ENCODE measurements at regions of chr4 and their contacts with region 1.

Region 1: DNA sequence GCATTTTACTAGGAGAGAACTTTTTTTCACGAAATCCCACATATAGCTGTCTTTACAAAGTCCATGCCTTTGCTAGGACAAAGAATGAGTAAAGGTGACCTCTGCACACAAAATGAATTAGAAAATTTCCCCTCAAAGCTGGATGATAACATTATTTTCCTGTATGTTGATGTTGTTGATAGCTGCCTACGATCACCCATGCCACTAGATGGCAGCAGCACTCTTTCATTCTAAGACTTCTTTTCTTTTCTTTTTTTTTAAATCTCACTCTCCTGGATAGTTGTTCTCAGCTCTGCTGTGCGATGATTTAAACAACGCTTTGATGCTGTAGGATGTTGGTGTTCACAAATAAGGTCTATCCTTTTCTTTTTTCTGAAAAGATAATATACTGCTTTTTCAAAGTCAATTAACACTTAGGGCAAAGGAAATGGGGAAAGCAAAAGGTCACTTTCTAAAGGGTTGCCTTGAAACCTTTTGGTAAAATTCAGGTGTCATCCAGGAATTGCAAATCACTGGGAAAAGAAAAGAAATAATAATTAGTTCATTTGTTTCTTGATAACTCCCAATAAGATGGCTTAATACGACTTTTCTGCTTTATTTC is 266.8 kb downstream of the C4orf33 start:
- DNase-seq: peak; percentile 51
- H3K4me3 ChIP-seq: no peak overlapping the region; a peak in 1 of 4 replicates
- H3K27ac ChIP-seq: no peak overlapping the region
- H3K4me1 ChIP-seq: peaks cover 0 to 2% of the 10 kb centered on the region in 2 experiments; a peak in 1 of 4 replicates
- H3K27me3 ChIP-seq: no peaks in the 10 kb centered on the region
- CTCF ChIP-seq: peak; percentile 93
- EP300 ChIP-seq: no peak
- RAD21 ChIP-seq: peak; percentile 94

Region 2: GRCh38 chr4:128862608-128863311 is 500.0 kb before region 1 on chr4:
- CTCF ChIA-PET with region 1: no interaction called
- POLR2A ChIA-PET with region 1: no interaction called
- DNase-seq: no peak
- H3K4me3 ChIP-seq: no peak overlapping the region
- H3K27ac ChIP-seq: no peak overlapping the region; a peak in 1 of 4 replicates
- H3K4me1 ChIP-seq: peaks cover 0 to 23% of the 10 kb centered on the region in 2 experiments; a peak in 1 of 4 replicates
- H3K27me3 ChIP-seq: no peaks in the 10 kb centered on the region
- CTCF ChIP-seq: no peak
- EP300 ChIP-seq: no peak
- RAD21 ChIP-seq: no peak

Region 3: DNA sequence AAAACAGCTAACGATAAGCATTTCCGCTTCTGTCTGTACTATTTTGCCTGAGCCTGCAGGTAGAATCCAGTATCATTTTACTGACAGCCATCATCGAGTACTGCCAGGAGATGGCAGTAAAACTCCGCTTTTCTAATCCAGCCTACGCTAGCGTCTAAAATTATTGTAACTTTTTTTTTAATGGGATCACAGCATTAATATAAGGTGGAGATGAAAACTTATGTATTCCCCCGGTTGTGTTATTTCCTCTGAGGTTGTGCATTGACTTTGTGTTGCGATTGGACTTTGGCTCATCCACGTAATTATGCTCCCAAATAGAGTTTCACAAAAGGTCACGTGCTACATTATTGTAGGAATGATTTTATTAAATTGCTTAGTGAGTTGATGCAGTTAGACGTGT is 18.7 kb before region 1 on chr4:
- CTCF ChIA-PET with region 1: interaction called, 12 read pairs
- POLR2A ChIA-PET with region 1: no interaction called
- DNase-seq: peak; percentile 34
- H3K4me3 ChIP-seq: no peak overlapping the region
- H3K27ac ChIP-seq: no peak overlapping the region
- H3K4me1 ChIP-seq: peaks cover 0 to 7% of the 10 kb centered on the region in 2 experiments; a peak in 1 of 4 replicates
- H3K27me3 ChIP-seq: no peaks in the 10 kb centered on the region
- CTCF ChIP-seq: peak; percentile 77
- EP300 ChIP-seq: no peak
- RAD21 ChIP-seq: peak; percentile 79

Region 4: GRCh38 chr4:129377131-129377845 is 14.5 kb after region 1 on chr4:
- CTCF ChIA-PET with region 1: interaction called, 33 read pairs
- POLR2A ChIA-PET with region 1: no interaction called
- DNase-seq: no peak
- H3K4me3 ChIP-seq: no peak overlapping the region
- H3K27ac ChIP-seq: no peak overlapping the region
- H3K4me1 ChIP-seq: no peaks in the 10 kb centered on the region
- H3K27me3 ChIP-seq: no peaks in the 10 kb centered on the region
- CTCF ChIP-seq: no peak
- EP300 ChIP-seq: no peak
- RAD21 ChIP-seq: no peak

Region 5: DNA sequence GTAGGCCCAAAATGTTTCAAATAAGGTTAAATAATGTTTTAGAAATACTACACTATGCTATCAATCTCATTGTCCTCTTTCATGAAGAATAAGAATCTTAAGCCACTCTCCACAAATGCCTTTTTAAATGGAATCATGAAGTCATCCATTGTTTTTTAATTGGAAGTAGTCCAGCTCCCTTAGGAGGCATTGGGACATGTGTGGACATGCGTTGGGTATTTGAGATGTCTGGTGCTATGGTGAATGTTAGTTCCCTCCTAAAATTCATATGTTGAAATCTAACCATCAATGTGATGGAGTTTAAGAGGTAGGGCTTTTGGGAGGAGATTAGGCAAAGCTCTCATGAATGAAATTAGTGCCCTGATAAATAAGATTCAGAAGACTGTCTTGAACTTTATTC is 22.2 kb after region 1 on chr4:
- CTCF ChIA-PET with region 1: interaction called, 10 read pairs
- POLR2A ChIA-PET with region 1: no interaction called
- DNase-seq: no peak
- H3K4me3 ChIP-seq: no peak overlapping the region
- H3K27ac ChIP-seq: no peak overlapping the region
- H3K4me1 ChIP-seq: no peaks in the 10 kb centered on the region
- H3K27me3 ChIP-seq: no peaks in the 10 kb centered on the region
- CTCF ChIP-seq: no peak
- EP300 ChIP-seq: no peak
- RAD21 ChIP-seq: no peak

Region 6: DNA sequence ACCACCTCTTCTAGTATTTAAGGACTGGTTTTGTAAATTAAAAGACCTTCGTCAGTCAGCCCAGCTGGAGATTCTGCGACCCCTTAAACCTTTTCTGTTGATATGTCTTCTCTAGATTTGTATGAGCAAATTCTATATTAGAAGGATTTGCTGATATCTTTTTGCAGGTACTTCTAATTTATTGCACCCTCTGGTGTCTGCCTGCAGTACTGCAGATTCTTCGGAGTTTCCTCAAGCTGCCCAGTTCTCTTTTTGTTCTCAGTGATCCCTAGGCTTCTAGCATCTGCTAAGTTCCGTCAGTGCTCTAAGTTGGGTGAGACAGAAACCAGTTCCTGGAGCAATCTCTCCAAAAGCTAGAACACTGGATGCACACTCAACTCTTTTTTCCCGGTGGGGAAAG is 278.4 kb after region 1 on chr4:
- CTCF ChIA-PET with region 1: interaction called, 152 read pairs
- POLR2A ChIA-PET with region 1: no interaction called
- DNase-seq: peak; percentile 13
- H3K4me3 ChIP-seq: no peak overlapping the region; a peak in 1 of 4 replicates
- H3K27ac ChIP-seq: no peak overlapping the region
- H3K4me1 ChIP-seq: no peaks in the 10 kb centered on the region
- H3K27me3 ChIP-seq: no peaks in the 10 kb centered on the region
- CTCF ChIP-seq: peak; percentile 81
- EP300 ChIP-seq: no peak
- RAD21 ChIP-seq: peak; percentile 76

Region 7: DNA sequence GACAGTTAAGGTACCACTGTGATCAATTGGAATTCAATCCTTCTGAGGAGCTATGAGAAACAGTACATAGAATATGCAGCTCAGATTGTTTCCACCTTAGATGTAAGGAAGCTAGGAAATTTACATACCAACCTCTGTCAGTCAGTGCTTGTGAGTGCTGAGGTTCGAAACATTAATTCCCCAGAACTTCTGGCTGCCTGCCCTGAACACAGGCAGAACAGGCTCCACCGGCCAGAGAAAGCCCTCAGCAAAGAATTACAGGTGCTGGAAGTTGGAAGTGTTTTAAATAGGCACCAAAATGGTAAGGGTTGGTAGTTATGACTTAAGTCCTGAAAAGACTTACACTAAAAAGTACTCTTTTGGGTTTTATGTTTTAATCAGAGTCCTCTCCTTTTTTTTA is 385.0 kb after region 1 on chr4:
- CTCF ChIA-PET with region 1: no interaction called
- POLR2A ChIA-PET with region 1: no interaction called
- DNase-seq: no peak
- H3K4me3 ChIP-seq: no peak overlapping the region
- H3K27ac ChIP-seq: no peak overlapping the region
- H3K4me1 ChIP-seq: no peaks in the 10 kb centered on the region
- H3K27me3 ChIP-seq: no peaks in the 10 kb centered on the region
- CTCF ChIP-seq: no peak
- EP300 ChIP-seq: no peak
- RAD21 ChIP-seq: no peak